Left cardiac atrium (tissue), 4 donors: ENCODE measurements at regions of chr17 and their contacts with region 1.

Region 1: DNA sequence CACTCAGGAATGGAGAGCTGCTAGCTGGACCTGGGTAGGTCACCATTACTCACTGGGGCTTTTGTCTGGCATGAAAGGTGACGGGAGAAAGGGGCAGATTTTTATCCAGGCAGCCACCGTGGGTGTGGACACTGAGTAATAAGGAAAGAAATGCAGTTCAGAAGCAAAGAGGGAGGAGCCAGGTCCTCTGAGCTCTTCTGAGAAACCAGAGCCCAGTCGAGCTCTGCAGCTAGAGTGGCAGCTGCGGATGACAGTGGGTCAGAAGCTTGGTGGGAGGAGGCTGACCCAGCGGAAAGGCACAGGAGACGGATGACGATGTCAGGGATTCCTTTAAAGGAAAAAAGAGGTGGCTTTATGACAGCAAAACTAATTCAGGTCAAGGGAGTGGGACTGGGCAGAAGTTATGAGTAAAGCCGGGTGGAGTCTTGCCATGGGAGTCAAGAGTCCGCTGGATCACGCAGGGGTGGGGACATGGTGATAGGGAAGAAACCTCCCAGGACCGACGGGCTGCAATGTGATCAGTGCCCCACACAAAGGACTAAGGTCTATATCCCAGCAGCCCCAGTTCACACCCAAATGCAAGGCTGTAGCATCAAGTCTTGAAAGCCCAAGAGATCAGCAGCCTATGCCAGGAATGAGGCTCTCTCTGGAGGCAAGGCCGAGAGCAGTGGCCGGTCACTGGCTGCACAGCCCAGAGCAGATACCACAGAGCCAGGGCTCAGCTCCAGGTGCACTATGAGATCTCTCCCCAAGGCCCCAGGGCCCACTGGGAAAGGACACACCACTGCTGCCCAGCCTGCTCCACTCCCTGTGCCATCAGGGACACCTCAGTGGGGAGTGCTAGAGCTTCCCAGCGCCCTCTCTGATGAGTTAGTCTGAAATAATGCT is 6.3 kb upstream of the MNT start:
- DNase-seq: peak; percentile 79
- ATAC-seq: peak; percentile 77 to 80

Region 2: DNA sequence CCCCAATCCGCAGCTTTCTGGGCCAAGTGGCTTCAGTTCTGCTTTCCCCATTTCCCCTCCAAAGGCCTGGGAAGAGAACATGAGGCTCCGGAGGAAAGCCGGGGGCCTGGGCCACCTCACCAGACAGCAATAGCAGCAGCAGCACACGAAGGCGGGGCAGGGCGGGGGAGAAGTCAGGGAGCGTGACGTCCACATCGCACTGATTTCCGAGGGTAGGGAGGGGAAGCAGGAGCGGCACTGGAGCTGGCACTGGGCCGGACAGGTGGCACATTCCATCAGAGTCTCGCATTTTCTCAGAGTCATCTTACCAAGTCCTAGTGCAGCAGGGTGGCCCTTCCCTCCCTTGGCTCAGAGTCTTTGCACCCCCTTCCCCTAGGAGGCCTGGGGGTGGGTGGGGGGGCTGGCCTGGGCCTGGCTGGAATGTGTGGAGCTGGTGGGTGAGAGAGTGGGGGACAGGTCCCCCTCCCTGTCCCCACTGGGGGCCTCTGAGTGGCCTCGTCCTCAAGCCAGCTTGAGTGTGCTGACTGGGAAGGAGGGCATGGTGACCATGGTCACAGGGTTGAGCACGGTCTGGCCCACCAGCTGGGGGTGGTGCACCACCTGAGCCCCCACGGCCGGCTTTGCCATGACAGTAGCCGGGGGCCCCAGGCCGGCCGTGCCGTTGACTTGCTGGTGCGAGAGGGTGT is 20.6 kb before region 1 on chr17:
- intact Hi-C with region 1: loop called in 1 of 2 experiments (anchors 1 kb)
- DNase-seq: no peak
- ATAC-seq: no peak

Region 3: GRCh38 chr17:2542456-2542855 is 135.3 kb after region 1 on chr17:
- intact Hi-C with region 1: no loop called
- DNase-seq: no peak
- ATAC-seq: no peak